ENCODE measurements at regions of chr2 and their contacts with region 1.

Region 1: DNA sequence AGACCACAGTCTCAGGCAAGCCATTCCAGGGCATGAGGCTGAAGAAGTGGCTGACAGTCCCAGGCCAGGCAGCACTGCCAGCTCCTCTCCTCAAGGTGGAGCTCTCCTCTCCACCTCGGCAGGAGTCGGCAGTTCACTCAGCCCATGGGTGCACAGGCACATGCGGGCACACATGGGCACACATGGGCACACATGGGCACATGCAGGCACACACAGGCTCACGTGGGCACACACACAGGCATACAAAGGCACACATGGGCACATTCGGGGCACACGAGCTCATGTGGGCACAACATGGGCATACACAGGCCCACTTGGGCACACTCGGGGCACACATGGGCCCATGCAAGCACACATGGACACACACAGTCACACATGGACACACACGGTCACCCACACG is 65.3 kb upstream of the TAF1B start:
- DNase-seq: no peak
- H3K4me3 ChIP-seq: no peak overlapping the region
- H3K4me3 Mint-ChIP-seq: peak overlapping the region in 2 of 7 donors; percentile 11 to 13
- H3K27ac ChIP-seq: no peak overlapping the region
- H3K27ac Mint-ChIP-seq: peak overlapping the region in 6 of 8 donors; percentile 68 to 99 (median 88)
- H3K4me1 ChIP-seq: peaks cover 42% of the 10 kb centered on the region
- H3K4me1 Mint-ChIP-seq: peaks cover 38 to 46% (median 46%) of the 10 kb centered on the region in 3 donors
- H3K27me3 ChIP-seq: no peaks in the 10 kb centered on the region
- H3K27me3 Mint-ChIP-seq: peaks cover 0 to 2% of the 10 kb centered on the region in 2 donors

Region 2: DNA sequence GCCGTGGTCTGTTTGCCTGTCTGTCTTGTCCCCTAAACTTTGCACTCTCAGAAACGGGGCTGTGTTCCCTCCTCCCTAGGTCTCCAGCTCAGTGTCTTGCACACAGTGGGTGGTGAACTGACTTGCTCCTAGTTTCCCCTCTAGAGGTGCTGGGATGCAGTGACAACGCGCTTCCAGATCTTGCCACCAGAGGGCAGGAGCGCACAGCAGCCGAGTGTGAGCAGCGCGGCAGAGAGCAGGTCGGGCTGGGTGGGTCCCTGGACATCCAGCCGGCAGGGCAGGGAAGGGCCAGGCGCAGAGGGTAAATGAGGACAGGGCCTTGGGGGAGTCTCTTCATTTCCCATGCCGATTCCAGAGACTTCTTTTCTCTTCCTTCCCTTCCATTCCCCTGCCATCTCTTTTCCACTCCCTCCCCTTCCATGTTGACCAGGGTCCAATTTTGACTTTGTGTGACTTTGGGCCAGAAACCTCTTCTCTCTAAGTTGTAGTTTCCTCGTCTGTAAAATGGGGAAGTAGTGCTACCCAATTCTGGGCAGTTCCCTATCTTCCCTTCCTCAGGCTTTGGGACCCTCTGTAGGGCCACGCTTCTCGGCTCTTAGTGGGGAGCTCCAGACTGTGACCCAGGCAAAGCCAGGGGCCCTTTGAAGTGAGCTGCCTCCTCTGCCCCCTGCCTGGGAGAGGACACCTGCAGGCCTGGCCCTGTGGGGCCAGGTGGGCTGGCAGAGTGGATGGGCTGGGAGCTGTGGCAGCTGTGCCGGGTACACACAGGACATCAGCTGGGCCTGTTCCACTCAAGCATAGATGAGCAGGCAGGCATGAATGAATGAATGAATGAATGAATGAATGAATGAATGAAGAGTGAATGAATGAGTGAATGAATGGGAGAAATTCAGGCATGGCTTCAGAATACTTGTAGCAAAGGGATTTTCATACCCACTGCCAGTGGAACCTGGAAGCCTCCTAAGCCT is 21.9 kb after region 1 on chr2:
- CTCF ChIA-PET with region 1: interaction called, 19 read pairs
- POLR2A ChIA-PET with region 1: no interaction called
- DNase-seq: peak; percentile 66 to 86 (median 80)
- H3K4me3 ChIP-seq: peak overlapping the region; percentile 28
- H3K4me3 Mint-ChIP-seq: peak overlapping the region; percentile 73 to 87 (median 82)
- H3K27ac ChIP-seq: no peak overlapping the region
- H3K27ac Mint-ChIP-seq: peak overlapping the region; percentile 73 to 98 (median 94)
- H3K4me1 ChIP-seq: peaks cover 20% of the 10 kb centered on the region
- H3K4me1 Mint-ChIP-seq: peaks cover 30 to 35% (median 32%) of the 10 kb centered on the region in 3 donors
- H3K27me3 ChIP-seq: no peaks in the 10 kb centered on the region
- H3K27me3 Mint-ChIP-seq: peaks cover 0 to 1% of the 10 kb centered on the region in 2 donors

Measured in CD8-positive, alpha-beta memory T cell (primary cell).